Ascending aorta (tissue), 2 donors: ENCODE measurements at regions of chr1 and their contacts with region 1.

Region 1: GRCh38 chr1:60765204-60765603 is 317.2 kb upstream of the NFIA start:
- DNase-seq: no peak
- H3K4me3 ChIP-seq: no peak overlapping the region
- H3K27ac ChIP-seq: no peak overlapping the region
- H3K4me1 ChIP-seq: no peaks in the 10 kb centered on the region
- H3K27me3 ChIP-seq: no peaks in the 10 kb centered on the region
- CTCF ChIP-seq: peak in 2 of 3 experiments; percentile 38 to 49

Region 2: GRCh38 chr1:60281360-60281932 is 483.8 kb before region 1 on chr1:
- intact Hi-C with region 1: loop called (anchors 5 kb)
- DNase-seq: peak in 1 of 2 donors; percentile 79
- H3K4me3 ChIP-seq: no peak overlapping the region
- H3K27ac ChIP-seq: no peak overlapping the region
- H3K4me1 ChIP-seq: peaks cover 0 to 10% of the 10 kb centered on the region in 2 donors
- H3K27me3 ChIP-seq: no peaks in the 10 kb centered on the region
- CTCF ChIP-seq: peak; percentile 80 to 97 (median 96)